Activated CD4-positive, alpha-beta T cell treated with anti-CD3 and anti-CD28 coated beads, Interleukin-2, amount 10 ng/mL, durations not matched to agents 24 days and 14 days (primary cell): ENCODE measurements at regions of chr19 and their contacts with region 1.

Region 1: GRCh38 chr19:10403137-10404021 is at the start of gene CDC37:
- DNase-seq: peak; percentile 100
- H3K4me3 Mint-ChIP-seq: peak within 1 kb of the TSS; percentile 99
- H3K27ac Mint-ChIP-seq: peak within 1 kb of the TSS; percentile 98
- H3K4me1 Mint-ChIP-seq: peaks cover 58% of the 10 kb centered on the region
- H3K27me3 Mint-ChIP-seq: no peaks in the 10 kb centered on the region
- total RNA-seq, gene CDC37: 304 and 310 TPM in 2 replicates

Region 2: DNA sequence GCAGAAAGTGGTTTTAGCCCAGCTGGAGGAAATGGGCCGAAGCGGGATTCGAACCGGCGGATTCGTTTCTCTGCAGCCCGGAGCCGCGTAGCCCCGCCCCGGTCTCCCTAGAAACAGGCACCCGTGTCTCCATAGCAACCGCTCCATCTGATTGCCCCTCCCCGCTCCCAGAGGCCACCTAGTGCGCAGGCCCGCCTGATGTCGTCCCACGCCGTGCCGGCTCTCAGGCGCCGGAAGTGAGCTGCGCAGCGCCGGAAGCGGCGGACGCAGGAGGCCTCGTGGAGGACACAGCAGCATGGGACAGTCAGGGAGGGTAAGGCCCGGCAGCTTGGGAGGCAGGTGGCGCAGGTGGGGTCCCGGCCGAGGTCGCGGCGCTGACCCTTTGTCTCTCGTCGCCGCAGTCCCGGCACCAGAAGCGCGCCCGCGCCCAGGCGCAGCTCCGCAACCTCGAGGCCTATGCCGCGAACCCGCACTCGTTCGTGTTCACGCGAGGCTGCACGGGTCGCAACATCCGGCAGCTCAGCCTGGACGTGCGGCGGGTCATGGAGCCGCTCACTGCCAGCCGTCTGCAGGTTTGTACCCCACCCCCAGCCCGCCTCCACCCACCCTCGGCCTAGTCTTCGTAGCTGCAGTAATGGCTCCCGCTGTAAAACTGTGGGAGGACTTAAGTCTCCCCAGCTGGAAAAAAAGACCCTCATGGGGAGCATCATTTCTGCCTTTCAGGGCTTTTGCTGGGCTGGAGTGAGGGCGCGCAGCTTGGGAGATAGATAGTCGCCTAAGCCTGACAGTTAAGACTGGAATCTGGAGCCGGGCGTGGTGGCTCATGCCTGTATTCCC is 297.1 kb before region 1 on chr19 and contains the start of gene PPAN:
- intact Hi-C with region 1: loop called (anchors 5 kb)
- DNase-seq: peak; percentile 99
- H3K4me3 Mint-ChIP-seq: peak within 1 kb of the TSS; percentile 85
- H3K27ac Mint-ChIP-seq: peak within 1 kb of the TSS; percentile 100
- H3K4me1 Mint-ChIP-seq: peaks cover 61% of the 10 kb centered on the region
- H3K27me3 Mint-ChIP-seq: peaks cover 1% of the 10 kb centered on the region
- total RNA-seq, gene PPAN: 222 and 232 TPM in 2 replicates

Region 3: DNA sequence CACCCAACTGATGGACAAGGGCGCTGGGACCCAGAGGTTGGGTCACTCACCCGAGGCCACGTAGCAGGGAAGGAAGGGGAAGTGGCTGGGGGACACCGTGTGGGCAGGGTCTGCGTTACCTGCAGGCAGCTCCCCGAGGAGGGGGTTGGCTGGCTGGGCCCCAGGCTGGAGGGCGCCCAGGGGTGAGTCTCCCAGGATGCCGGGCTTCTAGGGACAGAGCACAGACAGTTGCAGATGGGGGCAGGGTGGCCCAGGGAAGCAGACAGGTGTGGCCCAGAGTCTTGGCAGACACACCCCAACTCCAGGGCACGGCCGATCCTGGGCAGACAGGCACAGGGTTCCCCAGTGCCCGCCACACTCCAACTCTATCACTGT is 82.0 kb before region 1 on chr19:
- intact Hi-C with region 1: no loop called
- DNase-seq: no peak
- H3K4me3 Mint-ChIP-seq: no peak overlapping the region
- H3K27ac Mint-ChIP-seq: no peak overlapping the region
- H3K4me1 Mint-ChIP-seq: peaks cover under 1% of the 10 kb centered on the region
- H3K27me3 Mint-ChIP-seq: no peaks in the 10 kb centered on the region

Region 4: DNA sequence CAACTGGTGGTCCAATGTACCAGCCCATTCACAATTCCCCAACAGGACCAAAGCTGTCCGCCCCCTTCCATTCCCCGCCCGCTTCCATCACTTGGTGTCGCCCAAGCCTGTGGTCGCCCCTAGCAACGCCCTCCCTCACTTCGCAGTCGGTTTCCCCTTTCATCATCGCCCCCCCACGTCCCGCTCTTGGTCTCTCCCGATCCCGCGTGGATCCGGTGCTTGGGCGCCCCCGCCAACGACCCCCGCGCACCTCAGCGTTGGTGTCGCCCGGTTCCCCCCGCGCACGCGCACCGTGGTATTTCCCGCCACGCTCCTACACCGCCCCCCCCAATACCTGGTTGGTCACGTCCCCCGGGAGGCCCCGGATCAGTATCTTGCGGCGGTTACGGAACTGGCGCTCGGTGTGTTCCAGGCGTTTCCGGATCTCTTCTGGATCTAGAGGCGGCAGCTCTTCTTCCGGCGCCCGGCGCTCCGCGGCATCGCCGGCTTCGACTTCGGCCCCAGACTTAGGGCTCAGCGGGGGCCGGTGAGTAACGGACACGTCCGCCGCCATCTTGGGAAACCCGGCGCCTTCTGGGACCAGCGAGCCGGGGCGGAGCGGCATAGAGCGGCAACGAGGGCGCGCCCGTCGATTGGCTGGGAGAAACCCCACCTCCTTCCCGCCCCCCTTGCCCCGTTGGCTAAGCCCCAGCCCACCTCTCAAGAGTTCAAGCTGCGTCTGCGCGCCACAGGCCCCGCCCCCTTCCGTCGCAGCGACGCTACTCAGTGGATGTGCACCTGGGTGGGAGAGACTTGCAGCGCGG is 70.2 kb before region 1 on chr19 and contains the start of gene RAVER1:
- intact Hi-C with region 1: loop called (anchors 2 kb)
- DNase-seq: peak; percentile 99
- H3K4me3 Mint-ChIP-seq: peak within 1 kb of the TSS; percentile 96
- H3K27ac Mint-ChIP-seq: peak within 1 kb of the TSS; percentile 96
- H3K4me1 Mint-ChIP-seq: peaks cover 21% of the 10 kb centered on the region
- H3K27me3 Mint-ChIP-seq: no peaks in the 10 kb centered on the region
- total RNA-seq, gene RAVER1: 96.1 and 108 TPM in 2 replicates

Region 5: DNA sequence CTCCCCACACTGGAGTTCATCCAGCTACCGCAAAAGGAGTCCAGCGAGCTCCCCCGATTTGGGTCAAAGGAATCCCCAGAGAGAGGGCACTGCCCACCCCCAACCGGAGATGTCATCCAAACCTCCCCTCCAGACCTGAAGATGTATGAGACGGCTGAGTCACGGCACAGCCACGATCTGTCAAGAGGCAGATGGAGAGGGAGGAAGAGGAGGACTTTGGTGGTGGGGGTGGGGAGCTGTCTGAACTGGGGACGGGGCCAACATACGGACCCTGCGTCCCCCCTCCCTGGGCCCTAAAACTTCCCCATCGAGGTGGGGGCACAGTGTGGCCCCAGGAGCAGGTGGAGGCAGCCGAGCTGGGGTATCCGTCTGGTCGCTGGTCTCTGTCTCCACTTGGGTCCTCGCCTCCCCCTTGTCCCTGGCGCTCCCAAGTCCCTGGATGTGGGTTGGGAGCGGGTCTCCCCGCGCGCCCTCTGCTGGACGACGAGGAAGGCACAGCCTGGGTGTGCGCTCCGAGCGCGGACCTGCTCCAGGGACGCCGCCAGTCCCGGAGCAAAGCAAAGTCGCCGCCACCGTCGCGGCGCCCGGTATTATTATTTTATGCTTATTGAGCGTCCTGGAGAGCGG is 20.7 kb after region 1 on chr19:
- intact Hi-C with region 1: loop called (anchors 2 kb)
- DNase-seq: peak; percentile 92
- H3K4me3 Mint-ChIP-seq: peak overlapping the region; percentile 87
- H3K27ac Mint-ChIP-seq: peak overlapping the region; percentile 96
- H3K4me1 Mint-ChIP-seq: peaks cover 74% of the 10 kb centered on the region
- H3K27me3 Mint-ChIP-seq: peaks cover 5% of the 10 kb centered on the region

Region 6: DNA sequence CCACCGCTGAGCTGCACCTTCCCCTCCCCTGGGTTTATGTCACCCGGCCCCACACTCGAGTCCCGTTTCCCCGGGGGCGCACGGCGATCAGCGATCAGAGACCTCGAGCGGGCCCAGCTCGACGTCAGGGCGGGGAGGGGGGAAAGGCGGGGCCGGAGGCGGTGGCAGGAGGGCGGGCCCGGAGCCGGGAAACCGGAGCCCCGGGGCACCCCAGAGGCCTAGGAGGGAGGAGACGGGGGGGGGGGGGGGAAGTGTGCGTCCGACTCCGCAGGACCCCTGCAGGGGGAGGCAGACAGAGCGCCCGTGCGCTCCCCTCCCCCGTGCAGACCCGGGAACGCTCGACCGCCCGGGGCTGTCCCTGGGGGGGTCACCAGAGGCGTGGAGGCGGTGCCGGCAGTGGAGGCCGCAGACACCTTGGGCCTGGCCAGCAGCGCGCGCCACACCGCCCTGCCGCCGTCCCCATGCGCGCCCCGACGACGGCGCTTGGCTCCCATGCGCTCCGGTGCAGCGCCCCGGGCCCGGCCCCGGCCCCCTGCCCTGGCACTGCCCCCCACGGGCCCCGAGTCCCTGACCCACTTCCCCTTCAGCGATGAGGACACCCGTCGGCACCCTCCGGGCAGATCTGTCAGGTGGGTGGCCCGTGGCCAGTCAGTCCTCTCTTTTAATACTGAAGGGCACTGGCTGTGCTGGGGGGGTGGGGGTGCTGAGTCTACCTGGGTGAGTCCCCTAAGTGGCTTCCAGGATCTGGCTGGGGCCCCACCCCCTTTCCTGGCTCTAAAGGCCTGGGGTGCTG is 28.8 kb after region 1 on chr19:
- intact Hi-C with region 1: loop called (anchors 1 kb)
- DNase-seq: peak; percentile 88
- H3K4me3 Mint-ChIP-seq: peak overlapping the region; percentile 91
- H3K27ac Mint-ChIP-seq: peak overlapping the region; percentile 90
- H3K4me1 Mint-ChIP-seq: peaks cover 66% of the 10 kb centered on the region
- H3K27me3 Mint-ChIP-seq: peaks cover 13% of the 10 kb centered on the region

Region 7: GRCh38 chr19:10478903-10479384 is 75.6 kb after region 1 on chr19:
- intact Hi-C with region 1: loop called (anchors 2 kb)
- DNase-seq: peak; percentile 96
- H3K4me3 Mint-ChIP-seq: peak overlapping the region; percentile 77
- H3K27ac Mint-ChIP-seq: peak overlapping the region; percentile 78
- H3K4me1 Mint-ChIP-seq: peaks cover 13% of the 10 kb centered on the region
- H3K27me3 Mint-ChIP-seq: no peaks in the 10 kb centered on the region